Heart right ventricle (tissue), 16 donors: ENCODE measurements at regions of chr10 and their contacts with region 1.

Region 1: GRCh38 chr10:51789903-51790302 is 90.5 kb upstream of the CSTF2T start:
- DNase-seq: no peak
- ATAC-seq: no peak
- H3K4me3 ChIP-seq: no peak overlapping the region
- H3K27ac ChIP-seq: no peak overlapping the region
- H3K4me1 ChIP-seq: no peaks in the 10 kb centered on the region
- H3K27me3 ChIP-seq: no peaks in the 10 kb centered on the region
- CTCF ChIP-seq: no peak

Region 2: DNA sequence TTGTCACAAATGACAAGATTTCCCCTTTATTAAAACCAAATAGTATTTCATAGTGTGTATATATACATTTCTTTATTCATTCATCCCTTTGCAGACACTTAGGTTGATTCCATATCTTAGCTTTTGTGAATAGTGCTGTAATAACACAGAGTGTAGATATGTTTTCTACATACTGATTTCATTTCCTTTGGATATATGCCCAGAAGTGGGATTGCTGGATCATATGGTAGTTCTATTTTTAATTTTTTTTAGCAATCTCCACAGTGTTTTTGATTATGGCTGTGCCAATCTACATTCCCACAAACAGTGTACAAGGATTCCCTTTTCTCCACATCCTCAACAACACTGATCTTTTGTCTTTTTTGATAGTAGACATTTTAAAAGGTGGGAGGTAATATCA is 136.9 kb before region 1 on chr10:
- intact Hi-C with region 1: loop called in 1 of 10 experiments (anchors 5 kb)
- DNase-seq: no peak
- ATAC-seq: peak in 3 of 8 donors; percentile 31 to 63 (median 39)
- H3K4me3 ChIP-seq: no peak overlapping the region
- H3K27ac ChIP-seq: no peak overlapping the region
- H3K4me1 ChIP-seq: peaks cover 0 to 22% (median 7%) of the 10 kb centered on the region in 9 donors
- H3K27me3 ChIP-seq: no peaks in the 10 kb centered on the region
- CTCF ChIP-seq: no peak